HEK293 (cell line): ENCODE measurements at regions of chr13 and their contacts with region 1.

Region 1: DNA sequence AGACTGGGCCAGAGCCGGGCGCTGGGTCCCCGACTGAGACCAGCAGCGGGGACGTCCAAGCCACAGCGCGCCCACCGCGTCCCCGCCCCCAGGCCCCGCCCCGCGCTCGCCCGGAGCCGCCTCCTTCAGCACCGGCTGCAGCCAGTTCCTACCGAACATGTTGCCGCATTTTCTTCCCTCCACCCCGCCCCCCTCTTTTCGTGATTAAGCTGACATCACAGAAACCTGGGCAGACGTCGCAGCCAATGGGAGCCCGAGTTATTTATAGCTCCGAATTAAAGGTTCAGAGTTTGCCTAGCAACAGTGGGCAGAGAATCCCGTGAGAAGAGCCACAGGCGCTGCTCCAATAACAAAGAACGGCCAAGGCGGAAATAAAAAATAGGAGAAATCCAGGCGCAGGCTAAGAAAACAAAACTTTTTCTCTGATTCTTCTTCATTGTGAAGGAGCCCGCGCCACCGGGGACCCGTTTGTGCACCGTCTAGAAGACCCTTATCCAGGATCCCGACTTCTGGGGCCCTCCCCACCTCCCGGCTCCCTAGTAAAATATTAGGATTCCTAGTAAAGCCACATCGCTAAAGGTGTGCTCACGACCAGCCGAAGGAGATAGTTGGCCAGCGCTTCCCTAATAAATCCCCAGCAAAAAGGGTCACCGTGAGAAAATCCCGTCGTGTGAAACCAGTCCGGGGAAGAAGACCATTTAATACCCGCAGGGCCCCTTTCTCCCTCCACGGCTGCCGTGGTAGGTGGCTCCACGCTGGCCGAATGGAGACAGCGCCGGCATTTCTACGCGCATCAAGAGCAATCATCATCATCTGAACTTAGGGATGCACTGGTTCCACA is 61.7 kb downstream of the SERP2 start:
- H3K4me3 ChIP-seq: peak overlapping the region; percentile 66
- H3K27ac ChIP-seq: peak overlapping the region; percentile 80
- H3K4me1 ChIP-seq: peaks cover 3% of the 10 kb centered on the region
- CTCF ChIP-seq: no peak

Region 2: GRCh38 chr13:43905435-43906031 is 529.8 kb before region 1 on chr13:
- CTCF ChIA-PET with region 1: interaction called, 80 read pairs
- POLR2A ChIA-PET with region 1: interaction called, 6 read pairs
- H3K4me3 ChIP-seq: no peak overlapping the region
- H3K27ac ChIP-seq: no peak overlapping the region
- H3K4me1 ChIP-seq: no peaks in the 10 kb centered on the region
- CTCF ChIP-seq: no peak

Region 3: GRCh38 chr13:44141725-44142539 is 293.4 kb before region 1 on chr13:
- CTCF ChIA-PET with region 1: interaction called, 3 read pairs
- POLR2A ChIA-PET with region 1: interaction called, 11 read pairs
- H3K4me3 ChIP-seq: peak overlapping the region; percentile 49
- H3K27ac ChIP-seq: peak overlapping the region; percentile 92
- H3K4me1 ChIP-seq: peaks cover 9% of the 10 kb centered on the region; the same call in 1 of the 2 replicates
- CTCF ChIP-seq: no peak

Region 4: GRCh38 chr13:44191504-44192171 is 243.7 kb before region 1 on chr13:
- CTCF ChIA-PET with region 1: interaction called, 11 read pairs
- POLR2A ChIA-PET with region 1: interaction called, 7 read pairs
- H3K4me3 ChIP-seq: no peak overlapping the region
- H3K27ac ChIP-seq: peak overlapping the region; percentile 24; the same call in 1 of the 2 replicates
- H3K4me1 ChIP-seq: no peaks in the 10 kb centered on the region
- CTCF ChIP-seq: no peak

Region 5: DNA sequence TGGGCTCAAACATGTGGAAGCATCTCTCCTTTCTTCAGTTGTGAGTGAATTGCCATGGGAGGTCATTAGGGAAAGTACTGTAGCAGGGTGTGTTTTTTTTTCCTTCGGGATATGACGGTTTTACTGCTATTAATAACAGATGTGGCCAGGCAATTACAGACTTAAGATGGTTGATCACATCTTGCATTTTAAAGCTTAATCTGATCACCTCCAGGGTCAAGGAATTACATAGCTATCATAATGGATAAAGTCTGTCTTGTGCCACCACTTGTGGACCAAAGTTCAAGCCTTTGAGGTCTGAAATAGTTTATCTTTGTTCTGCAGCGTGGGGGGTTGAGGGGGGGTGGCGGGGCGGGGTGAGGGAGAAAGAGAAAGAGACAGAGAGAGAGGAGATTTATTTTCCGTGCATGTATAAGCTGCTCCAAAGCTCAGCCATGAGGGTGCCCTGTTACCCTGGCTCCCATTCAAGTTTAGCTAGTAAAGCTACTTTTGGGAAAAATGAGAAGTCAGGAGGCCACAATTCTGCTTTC is 67.2 kb before region 1 on chr13:
- CTCF ChIA-PET with region 1: no interaction called
- POLR2A ChIA-PET with region 1: interaction called, 12 read pairs
- H3K4me3 ChIP-seq: no peak overlapping the region
- H3K27ac ChIP-seq: no peak overlapping the region; the same call in 1 of the 2 replicates
- H3K4me1 ChIP-seq: peaks cover 2% of the 10 kb centered on the region
- CTCF ChIP-seq: no peak

Region 6: DNA sequence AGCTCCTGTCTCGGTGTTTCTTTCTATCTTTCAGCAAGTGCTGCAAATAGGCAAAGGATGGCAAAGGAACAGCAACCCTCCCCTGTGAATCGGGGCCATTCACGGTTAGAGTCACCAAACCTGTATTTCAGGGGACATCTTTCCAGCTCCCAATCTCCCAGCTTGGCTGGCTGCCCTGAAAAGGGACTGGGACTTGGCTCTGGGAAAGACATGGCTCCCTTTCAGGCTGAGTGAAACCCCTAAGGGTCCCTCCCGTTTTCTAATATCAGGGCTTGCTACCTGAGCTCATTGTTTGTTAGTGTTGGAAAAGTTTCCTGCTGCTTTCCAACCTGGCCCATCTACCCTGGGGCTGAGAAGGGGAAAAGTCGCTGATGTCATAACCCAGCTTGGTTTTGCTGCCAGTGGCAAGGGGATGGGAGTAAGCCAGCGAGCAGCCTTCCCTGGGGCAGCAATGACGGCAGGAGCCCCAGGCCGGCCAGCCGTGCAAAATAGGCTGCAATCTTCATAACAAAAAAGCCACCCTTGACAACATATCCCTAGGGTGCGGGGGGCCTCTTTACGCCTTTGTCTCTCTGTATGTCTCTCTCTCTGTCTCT is 31.8 kb before region 1 on chr13:
- CTCF ChIA-PET with region 1: interaction called, 3 read pairs
- POLR2A ChIA-PET with region 1: interaction called, 11 read pairs
- H3K4me3 ChIP-seq: no peak overlapping the region
- H3K27ac ChIP-seq: no peak overlapping the region
- H3K4me1 ChIP-seq: peaks cover 10% of the 10 kb centered on the region
- CTCF ChIP-seq: no peak

Region 7: GRCh38 chr13:44470638-44471562 is 35.5 kb after region 1 on chr13:
- CTCF ChIA-PET with region 1: interaction called, 18 read pairs
- POLR2A ChIA-PET with region 1: interaction called, 4 read pairs
- H3K4me3 ChIP-seq: no peak overlapping the region
- H3K27ac ChIP-seq: no peak overlapping the region
- H3K4me1 ChIP-seq: peaks cover 9% of the 10 kb centered on the region
- CTCF ChIP-seq: no peak